Naive thymus-derived CD4-positive, alpha-beta T cell (primary cell): ENCODE measurements at regions of chr6 and their contacts with region 1.

Region 1: GRCh38 chr6:131909408-131910218 is 41.6 kb downstream of the CCN2 start:
- DNase-seq: peak; percentile 23 to 72 (median 62)
- ATAC-seq: peak; percentile 95
- H3K4me3 ChIP-seq: no peak overlapping the region
- H3K4me3 Mint-ChIP-seq: peak overlapping the region in 4 of 10 donors; percentile 16 to 42 (median 36)
- H3K27ac ChIP-seq: no peak overlapping the region
- H3K27ac Mint-ChIP-seq: peak overlapping the region in 3 of 9 donors; percentile 2 to 22 (median 5)
- H3K4me1 ChIP-seq: peaks cover 0 to 5% of the 10 kb centered on the region in 2 donors
- H3K4me1 Mint-ChIP-seq: peaks cover 6 to 8% (median 8%) of the 10 kb centered on the region in 7 donors
- H3K27me3 ChIP-seq: peaks cover 0 to 4% of the 10 kb centered on the region in 2 donors
- H3K27me3 Mint-ChIP-seq: peaks cover 11 to 38% (median 32%) of the 10 kb centered on the region in 5 donors

Region 2: DNA sequence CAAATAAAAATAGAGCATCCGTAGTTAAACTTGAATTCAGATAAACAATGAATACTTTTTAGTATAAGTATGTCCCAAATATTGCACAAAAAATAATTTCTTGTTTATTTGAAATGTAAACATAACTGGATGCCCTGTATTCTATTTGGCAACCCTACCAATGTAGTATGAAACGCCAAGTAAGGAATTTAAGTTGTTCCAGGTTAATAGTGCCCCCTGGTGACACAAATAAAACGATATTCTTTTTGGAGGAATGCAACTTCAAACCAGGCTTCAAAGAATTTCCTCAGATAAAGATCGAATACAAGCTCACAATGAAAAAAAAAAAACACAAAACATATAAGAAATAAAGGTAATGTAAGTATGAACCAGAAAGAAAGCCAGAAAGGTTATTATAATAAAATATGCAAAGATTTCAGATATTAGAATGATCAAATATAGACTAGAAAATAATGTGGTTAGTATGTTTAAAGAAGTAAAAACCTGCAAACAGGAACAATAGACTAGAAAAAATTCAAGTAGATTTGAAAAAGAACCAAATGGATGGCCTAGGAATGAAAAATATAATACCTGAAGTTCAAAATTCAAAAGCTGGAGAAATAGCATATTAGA is 792.8 kb before region 1 on chr6:
- CTCF ChIA-PET with region 1: no interaction called
- POLR2A ChIA-PET with region 1: no interaction called
- intact Hi-C with region 1: loop called in 1 of 2 experiments (anchors 1 kb)
- DNase-seq: peak in 6 of 9 donors; percentile 26 to 54 (median 42)
- ATAC-seq: peak; percentile 49
- H3K4me3 ChIP-seq: no peak overlapping the region
- H3K4me3 Mint-ChIP-seq: no peak overlapping the region
- H3K27ac ChIP-seq: no peak overlapping the region
- H3K27ac Mint-ChIP-seq: no peak overlapping the region
- H3K4me1 ChIP-seq: no peaks in the 10 kb centered on the region
- H3K4me1 Mint-ChIP-seq: peaks cover 0 to 2% (median 0%) of the 10 kb centered on the region in 7 donors
- H3K27me3 ChIP-seq: no peaks in the 10 kb centered on the region
- H3K27me3 Mint-ChIP-seq: peaks cover 0 to 8% (median 0%) of the 10 kb centered on the region in 5 donors

Region 3: DNA sequence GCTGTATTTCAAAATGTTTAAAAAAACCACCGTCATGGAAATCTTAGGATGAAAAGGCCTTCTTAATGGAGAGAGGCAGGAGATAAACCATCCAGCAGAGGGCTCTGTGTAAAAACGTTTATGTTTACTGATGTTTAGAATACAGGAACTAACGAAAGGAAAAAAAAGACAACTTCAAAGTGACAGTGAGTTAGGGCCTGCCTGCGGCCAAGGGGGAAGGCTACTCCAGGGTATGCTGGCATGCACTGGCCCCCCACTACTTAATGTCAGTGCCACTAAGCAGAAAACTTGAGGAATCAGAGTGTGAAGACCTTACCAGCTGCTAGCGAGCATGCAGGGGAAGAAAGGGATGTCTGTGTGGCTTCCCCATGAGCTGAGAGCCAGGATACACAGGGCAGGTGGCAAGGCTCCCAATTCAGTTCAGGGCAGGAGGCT is 726.6 kb before region 1 on chr6:
- CTCF ChIA-PET with region 1: no interaction called
- POLR2A ChIA-PET with region 1: no interaction called
- intact Hi-C with region 1: loop called in 1 of 2 experiments (anchors 2 kb)
- DNase-seq: peak in 8 of 9 donors; percentile 6 to 57 (median 47)
- ATAC-seq: peak; percentile 83
- H3K4me3 ChIP-seq: no peak overlapping the region
- H3K4me3 Mint-ChIP-seq: peak overlapping the region; percentile 10 to 85 (median 72)
- H3K27ac ChIP-seq: no peak overlapping the region
- H3K27ac Mint-ChIP-seq: peak overlapping the region; percentile 86 to 98 (median 94)
- H3K4me1 ChIP-seq: peaks cover 0 to 8% of the 10 kb centered on the region in 2 donors
- H3K4me1 Mint-ChIP-seq: peaks cover 5 to 22% (median 17%) of the 10 kb centered on the region in 7 donors
- H3K27me3 ChIP-seq: no peaks in the 10 kb centered on the region
- H3K27me3 Mint-ChIP-seq: no peaks in the 10 kb centered on the region

Region 4: DNA sequence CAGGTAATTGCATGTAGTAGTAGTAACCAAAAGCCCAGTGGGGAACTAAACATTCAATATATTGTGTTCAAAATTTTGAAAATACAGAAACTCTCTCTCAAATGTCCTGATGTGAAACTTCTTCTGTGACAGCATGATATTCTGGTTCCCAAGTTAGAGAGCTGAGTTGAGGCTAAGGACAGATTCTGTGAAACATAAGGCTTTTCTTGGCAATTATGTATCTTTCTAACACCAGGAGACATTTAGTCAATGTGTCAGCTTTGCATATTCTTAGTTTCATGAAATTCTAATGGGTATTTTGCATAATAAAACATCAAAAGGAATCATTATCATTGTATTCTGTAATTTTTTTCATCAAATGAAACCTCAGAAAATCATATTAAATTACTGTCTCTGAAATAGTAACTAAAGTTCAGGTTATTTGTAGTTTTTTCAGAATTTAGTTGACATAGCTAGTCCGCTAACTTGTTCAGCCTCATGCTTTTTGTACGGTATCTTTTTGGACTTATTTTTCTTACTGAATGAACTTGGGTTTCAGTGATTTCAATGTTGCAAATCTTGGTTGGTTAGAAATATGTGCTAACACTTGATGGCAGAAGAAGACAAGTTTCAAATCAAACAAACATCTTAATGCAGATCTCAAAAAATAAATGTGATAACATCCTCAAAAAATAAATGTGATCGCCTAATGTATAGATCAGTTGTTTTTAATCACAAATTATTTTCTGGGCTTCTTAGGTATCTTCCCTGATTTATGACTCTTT is 704.0 kb before region 1 on chr6:
- CTCF ChIA-PET with region 1: no interaction called
- POLR2A ChIA-PET with region 1: no interaction called
- intact Hi-C with region 1: loop called in 1 of 2 experiments (anchors 2 kb)
- DNase-seq: peak in 2 of 9 donors; percentile 32 to 35
- ATAC-seq: no peak
- H3K4me3 ChIP-seq: no peak overlapping the region
- H3K4me3 Mint-ChIP-seq: peak overlapping the region in 8 of 10 donors; percentile 7 to 49 (median 31)
- H3K27ac ChIP-seq: peak overlapping the region; percentile 20
- H3K27ac Mint-ChIP-seq: peak overlapping the region in 8 of 9 donors; percentile 46 to 89 (median 74)
- H3K4me1 ChIP-seq: peaks cover 12 to 45% of the 10 kb centered on the region in 2 donors
- H3K4me1 Mint-ChIP-seq: peaks cover 36 to 72% (median 65%) of the 10 kb centered on the region in 7 donors
- H3K27me3 ChIP-seq: no peaks in the 10 kb centered on the region
- H3K27me3 Mint-ChIP-seq: no peaks in the 10 kb centered on the region

Region 5: DNA sequence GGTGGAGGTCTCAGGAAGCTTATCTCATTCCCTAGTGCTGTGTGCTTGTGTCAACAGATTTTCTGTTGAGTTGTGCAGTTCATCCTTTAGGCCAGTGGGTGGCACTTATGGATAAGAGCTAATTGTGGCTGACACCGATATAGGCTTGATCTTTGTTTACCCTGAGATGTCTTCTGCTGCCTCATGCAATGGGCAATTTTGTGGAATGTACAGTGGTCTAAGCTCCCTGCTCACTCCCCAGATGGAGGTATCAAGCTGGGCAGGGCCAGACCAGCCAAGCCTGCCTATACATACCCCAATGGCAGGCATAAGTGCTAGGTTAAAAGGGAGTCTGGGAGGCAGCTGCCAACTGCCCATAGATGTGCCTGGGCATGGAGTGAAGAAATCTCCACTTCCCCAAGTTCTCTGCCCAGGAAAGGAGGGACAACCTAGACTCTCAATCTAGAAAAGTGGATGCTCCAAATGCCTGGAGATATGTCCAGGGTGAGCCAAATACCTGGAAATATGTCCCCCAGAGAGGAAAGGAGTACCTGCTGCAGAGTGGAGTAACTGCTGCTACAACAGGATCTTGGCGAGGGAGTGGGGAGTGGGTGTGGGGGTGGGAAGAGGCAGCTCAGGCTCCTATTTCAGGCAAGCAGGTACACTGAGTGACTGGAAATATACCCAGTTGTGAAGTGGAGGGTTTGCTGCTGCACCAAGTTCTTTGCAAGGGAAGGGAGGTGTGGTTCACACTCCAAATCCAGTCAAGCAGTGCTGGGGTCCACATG is 389.8 kb before region 1 on chr6:
- CTCF ChIA-PET with region 1: no interaction called
- POLR2A ChIA-PET with region 1: no interaction called
- intact Hi-C with region 1: loop called in 1 of 2 experiments (anchors 1 kb)
- DNase-seq: peak in 7 of 9 donors; percentile 38 to 64 (median 55)
- ATAC-seq: peak; percentile 92
- H3K4me3 ChIP-seq: no peak overlapping the region
- H3K4me3 Mint-ChIP-seq: no peak overlapping the region
- H3K27ac ChIP-seq: no peak overlapping the region
- H3K27ac Mint-ChIP-seq: peak overlapping the region in 6 of 9 donors; percentile 29 to 69 (median 40)
- H3K4me1 ChIP-seq: peaks cover 0 to 9% of the 10 kb centered on the region in 2 donors
- H3K4me1 Mint-ChIP-seq: peaks cover 8 to 25% (median 20%) of the 10 kb centered on the region in 7 donors
- H3K27me3 ChIP-seq: no peaks in the 10 kb centered on the region
- H3K27me3 Mint-ChIP-seq: peaks cover 0 to 8% (median 0%) of the 10 kb centered on the region in 5 donors

Region 6: GRCh38 chr6:131782764-131783163 is 126.8 kb before region 1 on chr6:
- CTCF ChIA-PET with region 1: no interaction called
- POLR2A ChIA-PET with region 1: no interaction called
- intact Hi-C with region 1: loop called in 1 of 2 experiments (anchors 1 kb)
- DNase-seq: no peak
- ATAC-seq: no peak
- H3K4me3 ChIP-seq: no peak overlapping the region
- H3K4me3 Mint-ChIP-seq: no peak overlapping the region
- H3K27ac ChIP-seq: no peak overlapping the region
- H3K27ac Mint-ChIP-seq: no peak overlapping the region
- H3K4me1 ChIP-seq: no peaks in the 10 kb centered on the region
- H3K4me1 Mint-ChIP-seq: no peaks in the 10 kb centered on the region
- H3K27me3 ChIP-seq: no peaks in the 10 kb centered on the region
- H3K27me3 Mint-ChIP-seq: peaks cover 0 to 18% (median 5%) of the 10 kb centered on the region in 5 donors

Region 7: DNA sequence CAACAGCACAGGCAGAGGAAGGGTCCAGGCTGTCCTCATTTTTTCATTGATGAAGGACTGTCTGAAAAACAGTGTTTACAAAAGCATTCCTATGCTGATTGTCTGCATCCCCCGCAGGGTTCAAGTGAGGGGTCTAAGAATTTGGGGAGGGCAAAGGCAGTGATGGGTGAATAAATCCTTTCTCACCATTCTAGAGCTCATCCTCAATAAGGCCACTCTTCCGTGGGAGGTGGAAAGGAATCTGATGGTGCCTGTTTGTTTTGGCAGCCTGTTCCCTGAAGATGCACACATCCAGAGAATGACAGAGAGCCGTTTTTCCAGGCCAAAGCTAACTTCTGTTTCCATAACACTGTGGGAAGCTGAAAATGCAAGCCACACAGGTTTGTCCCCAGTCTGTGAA is 327.1 kb after region 1 on chr6:
- CTCF ChIA-PET with region 1: no interaction called
- POLR2A ChIA-PET with region 1: no interaction called
- intact Hi-C with region 1: no loop called
- DNase-seq: no peak
- ATAC-seq: no peak
- H3K4me3 ChIP-seq: no peak overlapping the region
- H3K4me3 Mint-ChIP-seq: no peak overlapping the region
- H3K27ac ChIP-seq: no peak overlapping the region
- H3K27ac Mint-ChIP-seq: no peak overlapping the region
- H3K4me1 ChIP-seq: no peaks in the 10 kb centered on the region
- H3K4me1 Mint-ChIP-seq: no peaks in the 10 kb centered on the region
- H3K27me3 ChIP-seq: no peaks in the 10 kb centered on the region
- H3K27me3 Mint-ChIP-seq: peaks cover 3 to 27% (median 21%) of the 10 kb centered on the region in 5 donors